ENCODE measurements at regions of chr12 and their contacts with region 1.

Region 1: DNA sequence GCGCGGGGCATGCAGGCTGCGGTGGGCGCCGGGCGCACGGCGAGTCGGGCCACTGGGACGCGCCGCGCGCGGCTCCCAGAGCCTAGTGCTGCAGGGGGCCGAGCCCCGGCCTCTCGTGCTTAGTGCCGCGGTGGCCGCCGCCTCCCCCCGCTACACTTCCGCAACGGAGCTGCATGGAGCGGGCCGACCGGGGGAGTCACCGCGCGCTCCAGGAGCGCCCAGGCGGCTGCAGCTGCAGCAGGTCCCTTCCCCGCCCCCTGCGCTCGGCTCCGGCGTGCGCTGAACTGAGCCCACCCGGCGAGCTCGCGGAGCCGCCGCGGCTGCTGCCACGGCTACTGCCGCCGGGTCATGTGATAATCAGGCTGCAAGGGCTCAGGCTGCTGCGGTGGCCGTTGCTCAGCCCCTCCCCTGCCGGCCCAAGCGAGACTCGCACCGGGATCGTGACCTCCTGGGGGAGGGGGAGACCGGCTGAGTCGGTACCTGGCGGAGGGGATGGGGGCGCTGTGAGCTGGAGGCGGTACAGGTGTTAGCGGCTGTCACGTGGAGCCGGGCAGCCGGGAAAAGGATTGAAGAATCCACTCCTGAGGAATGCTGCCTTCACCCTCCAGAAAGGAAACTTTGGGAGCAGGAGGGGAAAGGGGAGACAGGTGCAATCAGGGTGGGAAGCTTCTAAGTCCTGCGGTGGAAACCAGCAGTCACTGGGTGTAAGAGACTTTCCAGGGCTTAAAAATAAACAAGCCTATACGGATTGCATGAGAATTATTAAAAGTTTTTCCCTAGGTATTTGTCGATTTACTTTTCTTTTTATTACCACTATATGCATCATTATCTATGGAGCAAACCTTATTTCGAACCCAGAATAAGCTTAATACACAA is at the start of gene PPM1H:
- DNase-seq: peak; percentile 11
- H3K4me3 ChIP-seq: peak within 1 kb of the TSS; percentile 55 to 63 (median 60)
- H3K27ac ChIP-seq: no peak within 1 kb of the TSS
- H3K4me1 ChIP-seq: peaks cover 14% of the 10 kb centered on the region
- H3K27me3 ChIP-seq: peaks cover 17% of the 10 kb centered on the region
- CTCF ChIP-seq: peak in 1 of 2 donors; percentile 41
- total RNA-seq, gene PPM1H: 0.28 to 1.3 TPM

Region 2: GRCh38 chr12:62647586-62647985 is 287.5 kb before region 1 on chr12:
- CTCF ChIA-PET with region 1: no interaction called
- dilution Hi-C with region 1: no loop called
- in situ Hi-C with region 1: no loop called
- intact Hi-C with region 1: no loop called
- DNase-seq: no peak
- H3K4me3 ChIP-seq: no peak overlapping the region
- H3K27ac ChIP-seq: no peak overlapping the region
- H3K4me1 ChIP-seq: peaks cover 8% of the 10 kb centered on the region
- H3K27me3 ChIP-seq: no peaks in the 10 kb centered on the region
- CTCF ChIP-seq: no peak

Region 3: DNA sequence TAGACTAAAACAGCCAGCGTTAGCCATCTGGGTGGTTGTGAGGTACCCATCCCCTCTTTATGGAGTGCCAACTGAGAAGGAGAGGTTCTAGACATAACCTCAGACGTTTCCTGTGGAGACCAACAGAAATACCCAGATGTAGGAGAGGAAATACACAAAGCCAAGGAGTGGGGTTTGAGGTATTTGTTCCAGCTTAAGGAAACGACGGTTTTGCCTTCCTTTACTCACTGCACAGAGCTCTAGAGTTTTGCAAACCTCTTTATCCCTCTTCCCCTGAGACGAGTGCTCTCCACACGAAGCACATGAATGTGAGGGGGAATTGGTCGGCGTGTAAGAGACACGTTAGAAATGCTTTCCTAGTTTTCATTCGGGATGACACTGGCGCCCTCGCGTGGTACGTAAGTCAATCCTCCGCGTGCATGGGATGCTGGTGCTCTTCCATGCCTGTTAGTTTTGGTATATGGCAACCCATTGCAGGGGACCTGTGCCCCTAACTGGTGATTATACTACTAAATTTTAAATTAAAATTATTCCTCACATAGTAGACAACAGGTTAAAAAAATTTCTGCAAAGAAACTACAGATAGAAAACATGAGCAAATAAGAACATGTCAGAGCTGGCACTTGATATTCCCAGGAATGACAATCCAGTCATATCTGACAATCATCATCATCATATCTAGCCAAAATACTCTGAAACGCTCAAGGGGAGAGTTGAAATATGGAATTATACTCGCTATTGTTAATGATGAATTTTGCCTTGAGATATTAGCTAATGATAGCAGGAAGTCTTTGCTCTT is 121.8 kb before region 1 on chr12:
- CTCF ChIA-PET with region 1: no interaction called
- dilution Hi-C with region 1: no loop called
- in situ Hi-C with region 1: no loop called
- intact Hi-C with region 1: loop called (anchors 10 kb)
- DNase-seq: peak; percentile 40
- H3K4me3 ChIP-seq: no peak overlapping the region
- H3K27ac ChIP-seq: no peak overlapping the region
- H3K4me1 ChIP-seq: peaks cover 8% of the 10 kb centered on the region
- H3K27me3 ChIP-seq: no peaks in the 10 kb centered on the region
- CTCF ChIP-seq: peak; percentile 85 to 90

Region 4: DNA sequence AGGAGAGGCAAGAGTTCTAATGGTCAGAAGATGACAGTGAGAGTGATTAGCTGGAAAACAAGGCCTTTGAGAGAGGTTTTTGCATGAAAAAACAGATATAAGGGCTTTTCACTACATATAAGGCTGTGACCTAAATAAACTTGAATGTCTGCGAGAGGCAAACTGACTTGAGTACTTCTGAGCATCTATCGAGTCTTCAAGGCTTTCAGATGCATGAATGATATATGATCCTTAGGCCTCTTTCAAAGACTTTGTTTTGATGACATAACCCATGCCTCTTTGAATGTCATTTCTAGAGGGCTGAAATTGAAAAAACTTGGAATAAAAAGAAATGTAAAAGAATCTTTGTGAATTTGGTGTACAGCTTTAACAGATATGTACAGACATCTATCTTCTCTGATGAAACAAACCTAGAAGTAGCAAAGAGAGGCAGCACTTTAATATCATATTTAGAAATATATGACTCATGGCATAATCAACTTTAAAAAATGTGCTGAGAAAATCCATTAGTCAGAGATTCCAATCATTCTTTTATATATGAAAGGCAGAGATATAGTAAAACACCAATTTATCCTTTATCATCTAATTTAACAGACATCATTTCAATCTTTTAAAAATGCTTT is 72.7 kb before region 1 on chr12:
- CTCF ChIA-PET with region 1: no interaction called
- dilution Hi-C with region 1: no loop called
- in situ Hi-C with region 1: no loop called
- intact Hi-C with region 1: loop called (anchors 5 kb)
- DNase-seq: peak; percentile 38
- H3K4me3 ChIP-seq: no peak overlapping the region
- H3K27ac ChIP-seq: no peak overlapping the region
- H3K4me1 ChIP-seq: peaks cover 29% of the 10 kb centered on the region
- H3K27me3 ChIP-seq: no peaks in the 10 kb centered on the region
- CTCF ChIP-seq: no peak

Region 5: DNA sequence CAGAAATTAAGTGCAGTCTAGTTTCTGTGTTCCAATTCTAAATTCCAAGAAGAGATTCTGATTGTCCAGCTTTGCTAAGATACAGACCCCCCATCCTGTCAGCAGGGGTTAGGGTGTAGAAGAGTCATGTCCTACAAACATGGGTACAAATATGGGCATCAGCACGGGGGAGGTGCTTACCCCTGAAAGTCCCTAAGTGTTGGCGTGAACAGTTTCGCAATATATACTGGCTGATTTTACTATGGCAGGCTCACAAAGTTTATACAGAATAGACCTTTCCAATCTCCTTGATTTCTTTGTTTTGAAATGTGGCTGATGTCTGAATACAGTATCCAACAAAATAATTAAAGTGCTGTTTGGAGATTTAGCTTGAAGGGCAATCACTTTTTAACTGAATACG is 71.5 kb after region 1 on chr12:
- CTCF ChIA-PET with region 1: no interaction called
- dilution Hi-C with region 1: no loop called
- in situ Hi-C with region 1: no loop called
- intact Hi-C with region 1: no loop called
- DNase-seq: no peak
- H3K4me3 ChIP-seq: no peak overlapping the region
- H3K27ac ChIP-seq: no peak overlapping the region
- H3K4me1 ChIP-seq: no peaks in the 10 kb centered on the region
- H3K27me3 ChIP-seq: no peaks in the 10 kb centered on the region
- CTCF ChIP-seq: no peak